Gastrocnemius medialis (tissue), 4 donors: ENCODE measurements at regions of chrX and their contacts with region 1.

Region 1: DNA sequence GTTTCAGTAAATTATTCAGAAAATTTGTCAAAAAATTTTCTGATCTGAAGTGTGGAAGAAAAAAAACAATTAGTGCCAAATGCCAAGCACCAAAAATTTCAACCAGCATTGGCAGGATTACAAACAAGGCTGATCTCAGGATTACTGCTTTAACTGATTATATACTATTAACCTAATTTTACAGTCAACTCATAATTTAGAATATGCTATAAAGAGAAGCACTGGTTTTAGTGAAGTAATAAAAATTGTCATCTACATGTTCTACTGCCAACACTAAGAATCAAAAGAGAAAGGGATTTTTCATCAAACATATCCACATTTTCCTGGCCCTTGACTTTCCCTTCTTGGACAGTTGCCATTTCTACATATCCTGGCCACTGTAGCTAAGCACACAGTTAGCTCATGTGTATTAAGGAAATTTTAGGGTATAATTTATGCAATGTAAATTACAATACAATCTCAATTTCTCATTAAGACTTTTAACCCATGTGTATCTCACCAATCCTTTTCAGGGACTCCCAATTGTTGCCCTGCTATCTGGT is 33.8 kb downstream of the THOC2 start:
- DNase-seq: no peak
- ATAC-seq: no peak
- H3K4me3 ChIP-seq: no peak overlapping the region
- H3K27ac ChIP-seq: no peak overlapping the region
- H3K4me1 ChIP-seq: no peaks in the 10 kb centered on the region
- H3K27me3 ChIP-seq: no peaks in the 10 kb centered on the region
- CTCF ChIP-seq: no peak
- POLR2A ChIP-seq: no peak

Region 2: DNA sequence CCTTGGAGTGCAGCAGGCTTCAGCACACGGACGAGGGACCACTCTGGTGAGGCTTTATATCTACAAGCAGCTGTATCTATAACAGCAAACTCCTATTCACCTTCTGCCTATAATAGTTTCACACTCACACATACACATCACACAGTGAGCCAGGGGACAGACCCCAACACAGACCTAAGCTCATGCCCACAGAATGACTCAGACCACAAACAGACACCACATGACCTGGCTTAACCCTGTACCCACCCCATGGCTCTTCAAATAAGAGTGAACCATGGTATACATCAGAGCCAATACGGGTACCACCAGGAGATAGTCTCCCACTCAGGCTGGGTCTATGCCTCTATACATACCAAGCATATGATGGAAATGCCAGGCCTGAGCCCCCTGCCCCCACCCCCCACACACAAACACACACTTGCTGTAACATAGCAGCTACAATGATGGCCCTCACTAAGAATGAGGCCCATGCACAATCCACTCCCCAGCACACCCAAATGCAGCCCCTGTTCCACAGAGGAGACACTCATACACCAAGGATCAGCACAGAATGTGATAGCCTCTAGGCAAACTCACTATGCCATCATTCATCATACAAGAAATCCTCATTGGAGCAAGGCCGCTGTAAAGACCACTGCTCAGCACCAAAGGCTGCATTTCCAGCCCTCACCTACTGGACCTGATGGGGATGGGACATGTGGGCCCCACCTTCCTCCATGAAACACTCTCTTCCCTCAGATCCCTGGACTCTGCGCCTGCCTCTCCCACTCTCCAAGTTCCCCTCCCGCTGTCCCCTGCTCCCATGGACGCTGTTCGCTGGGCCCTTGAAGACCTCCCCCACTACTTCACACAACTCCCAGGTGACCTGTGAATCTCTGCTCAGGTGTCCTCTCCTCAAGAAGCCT is 98.7 kb after region 1 on chrX:
- in situ Hi-C with region 1: loop called in 1 of 4 experiments (anchors 25 kb)
- intact Hi-C with region 1: no loop called
- DNase-seq: no peak
- ATAC-seq: no peak
- H3K4me3 ChIP-seq: no peak overlapping the region
- H3K27ac ChIP-seq: no peak overlapping the region
- H3K4me1 ChIP-seq: no peaks in the 10 kb centered on the region
- H3K27me3 ChIP-seq: no peaks in the 10 kb centered on the region
- CTCF ChIP-seq: no peak
- POLR2A ChIP-seq: no peak